HEK293T (cell line): ENCODE measurements at regions of chr14 and their contacts with region 1.

Region 1: GRCh38 chr14:90399541-90400444 is 3.0 kb downstream of the CALM1 start:
- DNase-seq: peak; percentile 88

Region 2: DNA sequence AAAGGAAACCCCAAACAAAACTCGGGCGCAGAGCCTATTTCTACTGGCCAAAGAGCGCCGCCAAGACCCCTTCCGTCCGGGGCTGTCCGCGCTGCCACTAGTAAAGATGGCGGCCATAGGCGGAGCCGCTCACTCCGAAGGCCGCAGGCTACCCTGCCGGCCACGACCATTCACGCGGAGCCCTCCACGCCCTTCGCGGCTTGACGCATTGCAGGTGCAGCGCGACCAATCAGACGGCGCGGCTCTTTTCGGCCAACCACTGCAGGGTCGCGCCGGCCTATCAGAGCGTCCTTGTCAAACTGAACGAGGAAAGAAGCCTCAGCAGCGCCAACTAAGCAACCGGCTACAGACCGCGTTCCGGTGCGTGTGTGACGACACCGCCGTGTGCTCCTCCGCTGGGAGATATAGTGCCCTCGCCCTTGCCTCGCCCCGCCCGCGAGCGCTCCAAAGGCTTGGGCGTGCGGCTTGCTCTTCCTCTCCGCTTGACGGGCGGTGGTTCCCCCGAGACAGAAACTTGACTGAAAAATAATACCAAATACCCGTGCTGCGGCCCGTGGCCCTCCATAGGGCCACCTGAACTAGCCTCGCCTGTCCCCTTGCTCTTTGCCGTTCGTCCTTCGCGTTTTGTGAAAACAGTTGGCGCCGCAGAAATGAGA is 16.6 kb before region 1 on chr14:
- CTCF ChIA-PET with region 1: interaction called, 6 read pairs
- POLR2A ChIA-PET with region 1: interaction called, 68 read pairs
- DNase-seq: peak; percentile 92

Region 3: GRCh38 chr14:90697577-90698206 is 297.9 kb after region 1 on chr14:
- CTCF ChIA-PET with region 1: interaction called, 11 read pairs
- POLR2A ChIA-PET with region 1: interaction called, 3 read pairs
- DNase-seq: peak; percentile 83